B cell (primary cell): ENCODE measurements at regions of chr4 and their contacts with region 1.

Region 1: DNA sequence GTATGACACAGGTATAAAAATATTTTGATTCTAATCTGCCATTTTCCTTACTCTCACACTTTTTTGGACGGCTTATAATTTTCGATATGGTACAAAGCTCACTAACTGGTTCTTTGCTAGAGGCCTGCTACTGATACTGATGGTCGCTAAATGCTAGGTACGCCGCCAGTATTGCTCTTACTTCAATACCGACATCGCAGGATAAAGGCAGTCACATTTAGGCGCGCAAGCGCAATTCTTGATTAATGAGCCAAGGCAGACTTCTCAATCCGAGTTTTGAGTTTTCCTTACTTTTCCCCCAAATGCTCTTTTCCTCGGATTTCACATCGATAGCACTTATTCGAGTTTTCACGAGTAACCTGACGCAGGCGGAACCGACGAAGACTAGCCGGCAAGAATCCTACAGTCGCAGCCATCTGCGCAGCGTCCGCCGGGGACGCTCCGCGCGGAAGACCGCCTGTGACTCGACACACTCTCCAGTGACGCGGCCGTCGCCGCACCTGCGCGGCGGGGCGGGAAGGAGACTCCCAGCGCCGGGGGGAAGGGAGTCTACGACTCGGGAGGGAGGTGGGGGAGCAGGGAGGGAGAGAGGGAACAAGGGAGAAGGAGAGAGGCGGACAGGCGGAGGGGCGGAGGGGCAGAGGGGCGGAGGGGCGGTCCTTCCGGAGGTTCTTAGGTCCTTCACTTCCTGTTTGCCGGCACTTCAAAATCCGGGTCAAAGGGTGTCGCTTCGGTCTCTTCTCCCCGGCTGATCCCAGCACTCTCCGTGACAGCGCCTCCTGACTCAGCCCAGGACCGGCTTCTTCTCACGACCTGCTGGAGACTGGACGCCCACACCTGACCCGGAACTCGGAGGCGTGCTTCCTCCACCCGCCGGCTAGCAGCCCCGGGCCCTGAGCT is at the start of gene USP38:
- DNase-seq: peak; percentile 90
- ATAC-seq: peak; percentile 87
- H3K4me3 ChIP-seq: peak within 1 kb of the TSS; percentile 80 to 98 (median 85)
- H3K4me3 Mint-ChIP-seq: peak within 1 kb of the TSS; percentile 93
- H3K27ac ChIP-seq: peak within 1 kb of the TSS; percentile 84 to 95
- H3K27ac Mint-ChIP-seq: peak within 1 kb of the TSS; percentile 94
- H3K4me1 ChIP-seq: peaks cover 21 to 54% of the 10 kb centered on the region in 2 donors
- H3K4me1 Mint-ChIP-seq: peaks cover 59% of the 10 kb centered on the region
- H3K27me3 ChIP-seq: no peaks in the 10 kb centered on the region
- H3K27me3 Mint-ChIP-seq: no peaks in the 10 kb centered on the region
- CTCF ChIP-seq: peak; percentile 16
- total RNA-seq, gene USP38: 23.0 and 23.9 TPM in 2 replicates

Region 2: GRCh38 chr4:141220655-141221605 is 1963.5 kb before region 1 on chr4 and contains the start of gene ZNF330:
- CTCF ChIA-PET with region 1: no interaction called
- POLR2A ChIA-PET with region 1: no interaction called
- intact Hi-C with region 1: loop called (anchors 2 kb)
- DNase-seq: peak; percentile 92
- ATAC-seq: peak; percentile 92
- H3K4me3 ChIP-seq: peak within 1 kb of the TSS; percentile 93 to 99 (median 98)
- H3K4me3 Mint-ChIP-seq: peak within 1 kb of the TSS; percentile 91
- H3K27ac ChIP-seq: peak within 1 kb of the TSS; percentile 84 to 87
- H3K27ac Mint-ChIP-seq: peak within 1 kb of the TSS; percentile 88
- H3K4me1 ChIP-seq: peaks cover 10 to 18% of the 10 kb centered on the region in 2 donors
- H3K4me1 Mint-ChIP-seq: peaks cover 31% of the 10 kb centered on the region
- H3K27me3 ChIP-seq: peaks cover 0 to 4% (median 0%) of the 10 kb centered on the region in 4 experiments
- H3K27me3 Mint-ChIP-seq: peaks cover 6% of the 10 kb centered on the region
- CTCF ChIP-seq: no peak
- total RNA-seq, gene ZNF330: 29.4 and 36.7 TPM in 2 replicates

Region 3: GRCh38 chr4:141636082-141636770 is 1548.2 kb before region 1 on chr4 and contains the start of gene IL15:
- CTCF ChIA-PET with region 1: no interaction called
- POLR2A ChIA-PET with region 1: no interaction called
- intact Hi-C with region 1: loop called (anchors 5 kb)
- DNase-seq: peak; percentile 81
- ATAC-seq: peak; percentile 78
- H3K4me3 ChIP-seq: peak within 1 kb of the TSS; percentile 73 to 95 (median 76)
- H3K4me3 Mint-ChIP-seq: peak within 1 kb of the TSS; percentile 88
- H3K27ac ChIP-seq: peak within 1 kb of the TSS; percentile 63 to 83
- H3K27ac Mint-ChIP-seq: peak within 1 kb of the TSS; percentile 88
- H3K4me1 ChIP-seq: peaks cover 22 to 32% of the 10 kb centered on the region in 2 donors
- H3K4me1 Mint-ChIP-seq: peaks cover 40% of the 10 kb centered on the region
- H3K27me3 ChIP-seq: no peaks in the 10 kb centered on the region
- H3K27me3 Mint-ChIP-seq: peaks cover 12% of the 10 kb centered on the region
- CTCF ChIP-seq: no peak
- total RNA-seq, gene IL15: 6.1 and 7.6 TPM in 2 replicates

Region 4: DNA sequence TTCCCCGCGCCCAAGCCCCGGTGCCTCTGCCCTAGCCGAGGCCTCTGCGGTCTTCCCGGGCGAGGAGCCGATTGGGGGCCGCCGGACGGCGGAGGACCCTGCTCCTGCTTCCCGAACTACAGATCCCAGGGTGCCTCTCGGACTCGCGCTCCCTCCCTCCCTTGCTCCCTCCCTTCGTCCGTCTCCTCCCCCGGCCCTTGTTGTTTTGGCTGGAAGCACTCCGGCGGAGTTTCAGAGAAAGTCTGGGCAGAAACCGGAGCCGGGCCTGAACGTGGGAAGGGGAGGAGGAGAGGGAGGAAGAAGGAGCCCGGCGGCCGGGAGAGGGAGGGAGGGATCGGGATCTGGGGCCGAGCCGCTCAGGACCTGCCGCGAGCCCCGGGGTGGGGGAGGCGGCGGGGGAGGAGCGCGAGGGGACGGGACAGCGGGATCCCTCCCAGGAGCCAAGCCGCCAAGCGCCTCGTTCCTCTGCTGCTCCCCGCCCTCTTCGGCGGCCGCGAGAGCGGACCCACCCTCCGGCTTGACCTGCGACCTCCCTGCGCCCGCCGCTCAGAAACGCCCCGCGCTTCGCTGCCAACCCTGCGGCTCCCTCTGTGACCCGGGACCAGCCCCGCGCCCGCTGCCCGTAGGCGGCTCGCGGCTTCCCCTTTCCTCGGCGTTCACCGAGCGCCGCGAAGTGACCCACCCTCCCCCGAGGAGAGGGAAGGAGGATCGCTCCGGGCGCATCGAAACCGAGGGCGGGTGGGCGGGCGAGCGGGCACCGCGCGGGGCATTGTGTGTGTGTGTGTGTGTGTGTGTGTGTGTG is 151.7 kb after region 1 on chr4:
- CTCF ChIA-PET with region 1: no interaction called
- POLR2A ChIA-PET with region 1: no interaction called
- intact Hi-C with region 1: loop called (anchors 2 kb)
- DNase-seq: peak; percentile 69
- ATAC-seq: peak; percentile 56
- H3K4me3 ChIP-seq: peak overlapping the region; percentile 42 to 86 (median 73)
- H3K4me3 Mint-ChIP-seq: peak overlapping the region; percentile 96
- H3K27ac ChIP-seq: peak overlapping the region; percentile 46 to 76
- H3K27ac Mint-ChIP-seq: peak overlapping the region; percentile 87
- H3K4me1 ChIP-seq: peaks cover 12 to 17% of the 10 kb centered on the region in 2 donors
- H3K4me1 Mint-ChIP-seq: peaks cover 24% of the 10 kb centered on the region
- H3K27me3 ChIP-seq: peaks cover 0 to 9% (median 0%) of the 10 kb centered on the region in 4 experiments
- H3K27me3 Mint-ChIP-seq: peaks cover 23% of the 10 kb centered on the region
- CTCF ChIP-seq: no peak

Region 5: GRCh38 chr4:143513306-143514168 is 329.1 kb after region 1 on chr4 and contains the start of gene SMARCA5:
- CTCF ChIA-PET with region 1: no interaction called
- POLR2A ChIA-PET with region 1: interaction called, 3 read pairs
- intact Hi-C with region 1: loop called (anchors 1 kb)
- DNase-seq: peak; percentile 99
- ATAC-seq: peak; percentile 88
- H3K4me3 ChIP-seq: peak within 1 kb of the TSS; percentile 81 to 97 (median 93)
- H3K4me3 Mint-ChIP-seq: peak within 1 kb of the TSS; percentile 100
- H3K27ac ChIP-seq: peak within 1 kb of the TSS; percentile 94 to 99
- H3K27ac Mint-ChIP-seq: peak within 1 kb of the TSS; percentile 100
- H3K4me1 ChIP-seq: peaks cover 28 to 29% of the 10 kb centered on the region in 2 donors
- H3K4me1 Mint-ChIP-seq: peaks cover 39% of the 10 kb centered on the region
- H3K27me3 ChIP-seq: no peaks in the 10 kb centered on the region
- H3K27me3 Mint-ChIP-seq: peaks cover 8% of the 10 kb centered on the region
- CTCF ChIP-seq: no peak
- total RNA-seq, gene SMARCA5: 48.7 and 53.1 TPM in 2 replicates

Region 6: GRCh38 chr4:143558823-143559756 is 374.6 kb after region 1 on chr4:
- CTCF ChIA-PET with region 1: no interaction called
- POLR2A ChIA-PET with region 1: no interaction called
- intact Hi-C with region 1: loop called (anchors 1 kb)
- DNase-seq: peak; percentile 81
- ATAC-seq: peak; percentile 85
- H3K4me3 ChIP-seq: peak overlapping the region; percentile 57 to 75 (median 65)
- H3K4me3 Mint-ChIP-seq: peak overlapping the region; percentile 89
- H3K27ac ChIP-seq: peak overlapping the region; percentile 65 to 75
- H3K27ac Mint-ChIP-seq: peak overlapping the region; percentile 88
- H3K4me1 ChIP-seq: peaks cover 7 to 20% of the 10 kb centered on the region in 2 donors
- H3K4me1 Mint-ChIP-seq: peaks cover 26% of the 10 kb centered on the region
- H3K27me3 ChIP-seq: no peaks in the 10 kb centered on the region
- H3K27me3 Mint-ChIP-seq: no peaks in the 10 kb centered on the region
- CTCF ChIP-seq: peak; percentile 65